HCT116 (cell line): ENCODE measurements at regions of chr11 and their contacts with region 1.

Region 1: GRCh38 chr11:79052544-79052943 is 388.3 kb downstream of the TENM4 start:
- DNase-seq: no peak
- ATAC-seq: peak; percentile 75
- H3K4me3 ChIP-seq: no peak overlapping the region
- H3K27ac ChIP-seq: no peak overlapping the region
- H3K4me1 ChIP-seq: peaks cover 3 to 9% of the 10 kb centered on the region in 2 experiments; a peak in 3 of 4 replicates
- H3K27me3 ChIP-seq: peaks cover 21% of the 10 kb centered on the region; the same call in 1 of the 2 replicates
- CTCF ChIP-seq: 0 out of 6 replicates have a peak, but pooled peaks of 2 of the 3 experiments have one; percentile 15 to 18
- POLR2A ChIP-seq: no peak
- RAD21 ChIP-seq: no peak

Region 2: GRCh38 chr11:79062814-79063762 is 10.5 kb after region 1 on chr11:
- CTCF ChIA-PET with region 1: interaction called, 12 read pairs
- POLR2A ChIA-PET with region 1: no interaction called
- RAD21 ChIA-PET with region 1: no interaction called
- intact Hi-C with region 1: no loop called
- DNase-seq: peak; percentile 12
- ATAC-seq: peak; percentile 83
- H3K4me3 ChIP-seq: no peak overlapping the region
- H3K27ac ChIP-seq: no peak overlapping the region
- H3K4me1 ChIP-seq: no peaks in the 10 kb centered on the region
- H3K27me3 ChIP-seq: peaks cover 4% of the 10 kb centered on the region; the same call in 1 of the 2 replicates
- CTCF ChIP-seq: peak; percentile 33 to 55 (median 53); a peak in 4 of 6 replicates
- POLR2A ChIP-seq: no peak
- RAD21 ChIP-seq: peak; percentile 42; the same call in 1 of the 2 replicates